ENCODE measurements at regions of chr3 and their contacts with region 1.

Region 1: DNA sequence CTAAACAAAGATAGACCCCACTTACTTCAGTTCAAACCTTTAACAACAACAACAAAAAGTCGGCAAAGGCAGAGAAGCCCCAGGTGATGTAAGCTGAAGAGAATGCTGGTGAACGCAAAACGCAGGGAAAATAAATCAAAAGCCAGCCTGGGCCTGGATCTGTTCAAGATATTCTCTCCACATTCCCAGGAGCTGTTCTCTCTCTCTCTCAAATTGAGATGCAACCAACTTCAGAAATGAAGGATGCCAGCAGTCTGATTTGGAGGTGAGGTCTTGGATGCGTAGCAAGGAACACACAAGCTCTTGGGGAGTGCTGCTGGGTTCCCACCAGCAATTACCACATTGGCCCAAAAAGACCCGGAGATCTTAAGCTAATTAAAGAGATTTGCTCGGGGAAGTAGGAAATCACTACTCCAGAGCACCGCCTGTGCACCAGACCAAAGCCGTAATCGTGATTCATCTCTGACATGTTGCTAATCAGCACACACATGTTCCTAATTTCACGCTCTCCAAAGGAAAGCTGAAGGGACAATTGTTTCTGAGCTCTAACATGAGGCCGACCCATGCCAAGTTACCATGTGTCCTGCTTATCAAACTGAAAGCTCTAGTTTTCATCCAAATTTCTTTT is 37.1 kb downstream of the IL17RD start:
- DNase-seq: peak in 1 of 5 donors; percentile 28
- ATAC-seq: peak in 3 of 4 donors; percentile 38 to 76 (median 58)
- H3K4me3 ChIP-seq: peak overlapping the region in 2 of 12 donors; percentile 19 to 31
- H3K27ac ChIP-seq: peak overlapping the region in 10 of 12 donors; percentile 1 to 81 (median 14)
- H3K4me1 ChIP-seq: peaks cover 0 to 46% (median 14%) of the 10 kb centered on the region in 12 donors
- H3K27me3 ChIP-seq: no peaks in the 10 kb centered on the region
- CTCF ChIP-seq: no peak
- POLR2A ChIP-seq: no peak

Region 2: GRCh38 chr3:57164657-57165573 is 36.9 kb after region 1 on chr3 and contains the start of gene IL17RD:
- intact Hi-C with region 1: loop called in 1 of 10 experiments (anchors 5 kb)
- DNase-seq: peak; percentile 83 to 90 (median 88)
- ATAC-seq: peak; percentile 77 to 94 (median 88)
- H3K4me3 ChIP-seq: peak within 1 kb of the TSS; percentile 72 to 97 (median 85)
- H3K27ac ChIP-seq: peak within 1 kb of the TSS in 11 of 12 donors; percentile 20 to 82 (median 66)
- H3K4me1 ChIP-seq: peaks cover 0 to 56% (median 32%) of the 10 kb centered on the region in 12 donors
- H3K27me3 ChIP-seq: peaks cover 0 to 38% (median 0%) of the 10 kb centered on the region in 9 donors
- CTCF ChIP-seq: no peak
- POLR2A ChIP-seq: peak in 1 of 2 donors; percentile 60
- total RNA-seq, gene IL17RD: 3.5 to 11.3 (median 6.2) TPM